Adrenal gland (tissue), 19 donors: ENCODE measurements at regions of chr21 and their contacts with region 1.

Region 1: DNA sequence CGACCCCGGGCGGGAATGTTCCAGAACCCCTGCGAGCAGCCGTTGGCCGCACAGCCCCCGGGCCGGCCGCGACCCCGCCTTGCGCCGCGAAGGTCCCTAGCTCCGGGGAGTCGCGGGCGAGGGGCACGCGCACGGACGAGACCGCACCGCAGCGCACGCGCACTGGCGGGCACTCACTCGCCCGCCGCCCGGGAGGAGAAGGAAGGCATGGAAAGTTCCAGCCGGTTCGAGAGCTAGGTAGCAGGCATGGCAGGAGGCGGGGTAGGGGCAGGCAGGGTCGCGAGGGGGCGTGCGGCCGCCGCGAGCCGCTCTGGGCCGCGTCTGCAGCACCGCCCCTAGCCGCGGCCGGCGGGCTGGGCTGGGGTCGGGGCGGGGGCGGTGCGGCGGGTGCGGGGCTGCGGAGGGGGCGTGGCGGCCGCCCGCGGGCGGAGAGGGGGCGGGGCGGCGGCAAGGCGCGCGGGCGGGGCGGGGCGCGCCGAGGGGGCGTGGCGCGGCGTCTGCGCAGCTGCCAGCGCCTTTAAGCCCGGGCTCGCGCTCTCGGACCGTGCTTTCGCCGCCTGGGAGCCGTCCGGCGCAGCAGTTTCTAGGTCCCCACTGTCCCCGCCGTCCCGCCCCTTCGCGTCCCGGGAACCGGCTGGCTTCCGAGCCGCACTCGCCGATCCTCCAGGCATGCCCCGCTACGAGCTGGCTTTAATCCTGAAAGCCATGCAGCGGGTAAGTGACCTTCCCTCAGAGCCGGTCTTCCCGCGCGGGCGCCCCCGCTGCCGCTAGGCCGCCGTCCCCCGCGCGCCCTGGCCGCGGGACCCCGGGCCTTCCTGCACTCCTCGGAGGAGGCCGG is at the starts of genes MRPS6 and SLC5A3:
- DNase-seq: peak; percentile 88 to 93 (median 93)
- H3K4me3 ChIP-seq: peak within 1 kb of the TSS in 3 of 4 donors; percentile 33 to 87 (median 74)
- H3K27ac ChIP-seq: peak within 1 kb of the TSS; percentile 64 to 98 (median 87)
- H3K4me1 ChIP-seq: peaks cover 33 to 47% of the 10 kb centered on the region in 2 donors
- H3K27me3 ChIP-seq: no peaks in the 10 kb centered on the region
- CTCF ChIP-seq: peak in 1 of 6 experiments; percentile 14
- POLR2A ChIP-seq: peak; percentile 90 to 94
- total RNA-seq, gene MRPS6: 25.4 to 112 (median 70.7) TPM
- total RNA-seq, gene SLC5A3: 14.6 to 63.9 (median 40.2) TPM

Region 2: DNA sequence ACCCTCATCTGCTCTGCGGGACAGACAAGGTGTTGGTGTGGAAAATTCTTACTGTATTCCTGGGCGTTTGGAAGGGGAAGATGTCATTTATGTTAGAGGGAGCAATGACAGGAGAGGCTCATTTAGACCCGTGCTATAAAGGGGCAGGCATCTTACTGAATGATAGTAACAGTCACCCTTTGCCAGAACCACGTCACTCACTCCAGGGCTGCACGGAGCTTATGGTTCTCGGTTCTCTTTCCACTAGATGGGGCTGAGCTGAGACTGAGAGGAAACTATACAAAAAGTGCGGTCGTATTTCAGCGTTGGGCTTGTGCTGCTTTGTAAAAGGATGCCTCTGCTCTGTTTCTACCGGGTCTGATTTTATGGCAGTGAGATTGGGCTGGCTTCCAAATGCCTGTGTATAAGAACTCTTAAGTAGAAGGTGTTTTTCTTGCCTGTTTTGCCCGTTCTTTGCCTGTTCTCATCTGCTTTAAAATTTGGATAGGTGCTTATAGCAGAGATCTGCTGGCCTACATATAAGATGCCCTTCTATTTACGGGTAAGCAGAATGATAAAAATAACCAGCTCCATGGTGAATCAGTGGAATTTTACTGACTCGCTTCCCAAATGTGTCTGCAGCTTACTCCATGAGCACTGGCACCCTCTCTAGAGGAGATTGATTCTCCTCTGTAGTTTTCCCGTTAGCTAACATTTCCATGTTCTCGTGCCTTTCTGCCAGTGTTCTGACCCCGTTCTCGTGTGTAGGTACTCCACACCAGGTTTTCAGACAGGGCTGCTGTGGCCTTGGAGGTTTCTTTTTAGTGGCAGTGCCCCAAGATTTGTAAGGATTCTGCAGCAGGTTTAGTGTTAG is 56.0 kb after region 1 on chr21:
- intact Hi-C with region 1: loop called in 1 of 2 experiments (anchors 5 kb)
- DNase-seq: peak; percentile 65 to 90 (median 81)
- H3K4me3 ChIP-seq: peak overlapping the region in 1 of 4 donors; percentile 30
- H3K27ac ChIP-seq: peak overlapping the region; percentile 80 to 92 (median 90)
- H3K4me1 ChIP-seq: peaks cover 58 to 59% of the 10 kb centered on the region in 2 donors
- H3K27me3 ChIP-seq: no peaks in the 10 kb centered on the region
- CTCF ChIP-seq: peak; percentile 15 to 60 (median 32)
- POLR2A ChIP-seq: peak in 1 of 2 donors; percentile 41

Region 3: GRCh38 chr21:34202553-34203372 is 129.5 kb after region 1 on chr21:
- intact Hi-C with region 1: loop called in 1 of 2 experiments (anchors 5 kb)
- DNase-seq: peak; percentile 50 to 72 (median 58)
- H3K4me3 ChIP-seq: peak overlapping the region in 1 of 4 donors; percentile 54
- H3K27ac ChIP-seq: peak overlapping the region in 4 of 5 donors; percentile 63 to 86 (median 74)
- H3K4me1 ChIP-seq: peaks cover 11 to 54% of the 10 kb centered on the region in 2 donors
- H3K27me3 ChIP-seq: no peaks in the 10 kb centered on the region
- CTCF ChIP-seq: no peak
- POLR2A ChIP-seq: no peak